Caco-2 (cell line): ENCODE measurements at regions of chr6 and their contacts with region 1.

Region 1: GRCh38 chr6:129753422-129753821 is 43.4 kb upstream of the ARHGAP18 start:
- DNase-seq: no peak
- H3K4me3 ChIP-seq: no peak overlapping the region
- H3K4me3 Mint-ChIP-seq: no peak overlapping the region
- H3K27ac Mint-ChIP-seq: no peak overlapping the region
- H3K4me1 ChIP-seq: no peaks in the 10 kb centered on the region
- H3K4me1 Mint-ChIP-seq: no peaks in the 10 kb centered on the region
- H3K27me3 ChIP-seq: no peaks in the 10 kb centered on the region
- H3K27me3 Mint-ChIP-seq: no peaks in the 10 kb centered on the region
- CTCF ChIP-seq: no peak

Region 2: DNA sequence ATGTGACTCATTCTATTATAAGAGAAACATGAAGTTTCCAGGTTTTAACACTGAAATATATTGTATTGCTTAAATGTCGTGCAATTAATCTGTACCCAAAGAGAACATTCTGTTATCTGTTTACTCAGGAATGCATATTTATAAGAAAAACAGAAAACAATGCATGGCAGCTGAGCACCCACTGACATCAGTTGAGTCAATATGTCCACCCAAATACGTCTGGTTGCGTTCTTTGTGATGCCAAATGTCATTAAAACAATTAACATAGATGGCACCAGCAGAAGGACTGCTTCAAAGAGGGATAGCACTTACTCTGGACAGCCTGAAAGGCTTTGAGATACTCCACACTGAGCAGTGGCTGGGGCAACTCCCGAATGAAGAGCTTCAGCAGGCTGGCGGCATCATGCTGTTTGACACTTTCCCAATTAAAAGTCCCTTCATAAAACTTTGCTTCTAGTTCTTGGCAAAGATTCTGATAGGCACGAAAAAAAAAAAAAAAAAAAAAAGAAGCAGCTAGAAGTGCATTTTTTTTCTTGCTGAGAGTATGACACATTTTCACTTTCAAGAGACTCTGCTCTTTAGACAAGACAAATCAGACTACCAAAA is 145.7 kb before region 1 on chr6:
- CTCF ChIA-PET with region 1: interaction called, 11 read pairs
- POLR2A ChIA-PET with region 1: no interaction called
- intact Hi-C with region 1: no loop called
- DNase-seq: no peak
- H3K4me3 ChIP-seq: no peak overlapping the region
- H3K4me3 Mint-ChIP-seq: no peak overlapping the region
- H3K27ac Mint-ChIP-seq: no peak overlapping the region
- H3K4me1 ChIP-seq: peaks cover 9% of the 10 kb centered on the region
- H3K4me1 Mint-ChIP-seq: peaks cover 14% of the 10 kb centered on the region
- H3K27me3 ChIP-seq: no peaks in the 10 kb centered on the region
- H3K27me3 Mint-ChIP-seq: no peaks in the 10 kb centered on the region
- CTCF ChIP-seq: no peak

Region 3: DNA sequence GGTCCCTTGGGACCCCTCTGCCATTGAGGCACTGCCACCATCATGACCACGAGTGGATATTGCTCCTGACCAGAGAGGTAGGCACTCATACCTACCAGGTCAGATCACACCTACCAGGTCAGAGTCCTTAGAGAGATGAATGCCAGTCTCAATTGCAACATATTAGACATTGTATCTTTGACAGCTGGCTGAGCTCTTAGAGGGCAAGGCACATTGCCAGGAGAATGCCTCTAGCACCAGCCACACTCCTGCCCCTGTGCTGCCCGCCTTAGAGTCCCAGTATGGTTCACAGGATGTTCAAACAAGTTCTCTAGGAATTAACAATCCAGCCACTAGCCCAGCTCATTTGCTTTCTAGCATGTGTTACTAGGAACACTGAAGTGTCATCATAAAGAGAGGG is 41.8 kb after region 1 on chr6:
- CTCF ChIA-PET with region 1: no interaction called
- POLR2A ChIA-PET with region 1: no interaction called
- intact Hi-C with region 1: no loop called
- DNase-seq: no peak
- H3K4me3 ChIP-seq: no peak overlapping the region
- H3K4me3 Mint-ChIP-seq: no peak overlapping the region
- H3K27ac Mint-ChIP-seq: no peak overlapping the region
- H3K4me1 ChIP-seq: no peaks in the 10 kb centered on the region
- H3K4me1 Mint-ChIP-seq: no peaks in the 10 kb centered on the region
- H3K27me3 ChIP-seq: no peaks in the 10 kb centered on the region
- H3K27me3 Mint-ChIP-seq: no peaks in the 10 kb centered on the region
- CTCF ChIP-seq: no peak

Region 4: GRCh38 chr6:130223508-130223907 is 470.1 kb after region 1 on chr6:
- CTCF ChIA-PET with region 1: no interaction called
- POLR2A ChIA-PET with region 1: no interaction called
- intact Hi-C with region 1: no loop called
- DNase-seq: no peak
- H3K4me3 ChIP-seq: no peak overlapping the region
- H3K4me3 Mint-ChIP-seq: no peak overlapping the region
- H3K27ac Mint-ChIP-seq: no peak overlapping the region
- H3K4me1 ChIP-seq: no peaks in the 10 kb centered on the region
- H3K4me1 Mint-ChIP-seq: no peaks in the 10 kb centered on the region
- H3K27me3 ChIP-seq: no peaks in the 10 kb centered on the region
- H3K27me3 Mint-ChIP-seq: no peaks in the 10 kb centered on the region
- CTCF ChIP-seq: no peak

Region 5: DNA sequence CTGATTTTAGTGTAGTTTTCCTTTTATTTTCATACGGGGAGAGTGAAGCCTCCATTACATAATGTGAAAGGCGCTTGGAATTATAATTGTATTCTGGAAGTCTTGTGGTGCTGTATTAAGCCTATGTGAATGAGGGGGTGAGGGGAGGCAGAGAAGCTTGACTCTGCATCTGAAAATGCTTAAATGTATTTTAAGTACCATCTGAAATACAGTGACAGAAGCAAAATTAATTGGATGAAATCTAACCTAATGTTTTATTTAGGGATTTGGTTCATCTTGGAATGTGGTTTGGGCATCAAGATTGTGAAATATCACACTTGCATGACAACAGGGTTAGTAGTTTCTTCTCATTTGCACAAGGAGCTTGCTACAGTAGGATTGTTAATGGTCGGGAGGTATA is 653.6 kb after region 1 on chr6:
- CTCF ChIA-PET with region 1: no interaction called
- POLR2A ChIA-PET with region 1: no interaction called
- intact Hi-C with region 1: no loop called
- DNase-seq: no peak
- H3K4me3 ChIP-seq: no peak overlapping the region
- H3K4me3 Mint-ChIP-seq: no peak overlapping the region
- H3K27ac Mint-ChIP-seq: no peak overlapping the region
- H3K4me1 ChIP-seq: no peaks in the 10 kb centered on the region
- H3K4me1 Mint-ChIP-seq: no peaks in the 10 kb centered on the region
- H3K27me3 ChIP-seq: no peaks in the 10 kb centered on the region
- H3K27me3 Mint-ChIP-seq: no peaks in the 10 kb centered on the region
- CTCF ChIP-seq: no peak